Activated CD4-positive, alpha-beta T cell treated with anti-CD3 and anti-CD28 coated beads, Interleukin-2, amount 10 ng/mL, durations not matched to agents 24 days and 14 days (primary cell): ENCODE measurements at regions of chr6 and their contacts with region 1.

Region 1: DNA sequence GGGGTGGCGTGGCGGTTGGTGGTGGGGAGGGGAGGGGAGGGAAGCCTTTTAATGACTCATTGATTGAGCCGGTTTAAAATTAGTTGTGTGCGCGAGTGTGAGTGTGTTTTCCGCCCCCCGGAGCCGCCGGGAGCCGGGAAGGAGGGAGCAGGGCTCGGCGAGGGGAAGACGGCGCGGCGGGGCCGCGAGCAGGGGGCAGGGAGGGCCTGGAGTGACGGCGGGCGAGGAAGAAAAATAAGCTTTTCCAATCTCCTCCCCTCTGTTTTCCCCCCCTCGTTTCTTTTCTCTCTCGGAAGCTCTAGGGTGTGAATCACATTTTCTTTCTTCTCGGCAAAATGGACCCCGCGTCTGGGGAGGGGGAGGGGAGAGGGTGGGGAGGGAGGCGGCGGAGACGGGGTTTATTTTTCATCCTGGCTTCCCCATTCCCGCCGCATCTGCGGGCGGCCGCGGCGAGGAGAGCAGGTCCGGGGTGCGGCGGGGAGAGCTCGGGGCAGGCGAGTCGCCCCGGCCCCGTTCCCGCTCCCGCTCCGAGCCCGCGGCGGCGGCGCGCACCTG is 847 bp downstream of the BICRAL start:
- DNase-seq: peak; percentile 88
- H3K4me3 Mint-ChIP-seq: peak overlapping the region; percentile 87
- H3K27ac Mint-ChIP-seq: peak overlapping the region; percentile 96
- H3K4me1 Mint-ChIP-seq: peaks cover 29% of the 10 kb centered on the region
- H3K27me3 Mint-ChIP-seq: no peaks in the 10 kb centered on the region

Region 2: GRCh38 chr6:42761287-42762067 is 21.2 kb before region 1 on chr6:
- intact Hi-C with region 1: no loop called
- DNase-seq: no peak
- H3K4me3 Mint-ChIP-seq: no peak overlapping the region
- H3K27ac Mint-ChIP-seq: no peak overlapping the region
- H3K4me1 Mint-ChIP-seq: peaks cover 2% of the 10 kb centered on the region
- H3K27me3 Mint-ChIP-seq: no peaks in the 10 kb centered on the region

Region 3: DNA sequence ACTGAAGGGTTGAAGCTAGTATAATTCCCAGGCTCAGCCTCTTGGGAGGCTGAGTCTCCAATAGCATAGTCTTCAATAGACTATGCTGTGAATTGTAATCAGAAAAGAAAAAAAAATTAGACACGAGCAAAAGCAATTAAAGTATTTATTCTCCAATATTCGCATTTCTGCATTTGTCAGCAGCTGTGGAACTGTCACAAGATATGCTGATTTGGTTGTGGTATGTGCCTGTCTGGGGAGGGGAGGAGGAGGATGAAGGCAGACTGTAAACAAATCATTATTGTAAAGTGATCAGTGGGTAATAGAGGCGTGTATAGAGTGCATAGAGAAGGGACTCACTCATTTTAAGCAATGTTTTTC is 11.0 kb before region 1 on chr6:
- intact Hi-C with region 1: loop called (anchors 1 kb)
- DNase-seq: peak; percentile 77
- H3K4me3 Mint-ChIP-seq: peak overlapping the region; percentile 83
- H3K27ac Mint-ChIP-seq: peak overlapping the region; percentile 99
- H3K4me1 Mint-ChIP-seq: peaks cover 55% of the 10 kb centered on the region
- H3K27me3 Mint-ChIP-seq: no peaks in the 10 kb centered on the region

Region 4: GRCh38 chr6:42890311-42891198 is 107.9 kb after region 1 on chr6:
- intact Hi-C with region 1: loop called (anchors 2 kb)
- DNase-seq: peak; percentile 97
- H3K4me3 Mint-ChIP-seq: peak overlapping the region; percentile 96
- H3K27ac Mint-ChIP-seq: peak overlapping the region; percentile 98
- H3K4me1 Mint-ChIP-seq: peaks cover 21% of the 10 kb centered on the region
- H3K27me3 Mint-ChIP-seq: no peaks in the 10 kb centered on the region